Activated B cell treated with CpG ODN at 0.5 μM for 24 hours (primary cell): ENCODE measurements at regions of chr6 and their contacts with region 1.

Region 1: DNA sequence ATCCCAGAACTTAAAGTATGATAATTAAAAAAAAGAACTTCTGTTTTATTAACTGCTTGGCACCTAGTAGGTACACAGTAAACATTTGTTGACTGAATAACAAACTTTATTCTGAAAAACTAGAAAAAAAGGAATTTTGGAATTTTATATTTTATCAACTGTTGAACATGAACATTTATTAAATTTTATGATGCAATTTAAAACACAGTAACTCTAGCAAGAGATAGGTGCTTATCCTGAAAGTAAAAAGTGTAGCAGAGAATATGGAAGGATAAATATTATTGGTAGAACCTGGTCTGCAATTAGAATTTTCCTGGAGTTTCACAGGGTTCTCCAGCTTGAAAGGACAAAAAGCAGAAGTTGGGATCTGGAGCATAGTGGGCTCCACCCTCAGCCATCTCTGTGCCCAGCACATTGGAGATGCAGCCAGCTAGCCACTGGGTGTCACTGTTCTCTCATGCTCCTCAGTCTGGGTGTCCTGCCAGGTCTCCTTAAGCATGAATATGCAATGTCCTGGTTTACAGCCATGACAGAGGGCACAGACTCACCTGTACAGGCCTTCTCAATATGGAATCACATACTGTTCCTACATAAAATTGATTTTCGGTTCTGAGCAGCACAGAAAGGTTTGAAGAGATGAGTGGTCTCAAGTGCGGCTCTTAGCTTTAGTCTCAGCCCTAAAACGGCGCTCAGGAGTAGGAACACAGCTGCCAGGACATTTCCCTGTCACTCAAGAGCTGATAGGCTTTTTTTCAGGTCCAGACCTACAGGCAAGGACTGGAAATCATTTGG is 31.7 kb upstream of the IL20RA start:
- DNase-seq: peak; percentile 39
- ATAC-seq: peak; percentile 100
- H3K4me3 Mint-ChIP-seq: no peak overlapping the region
- H3K27ac Mint-ChIP-seq: no peak overlapping the region
- H3K4me1 Mint-ChIP-seq: peaks cover 2% of the 10 kb centered on the region
- H3K27me3 Mint-ChIP-seq: peaks cover 2% of the 10 kb centered on the region
- CTCF ChIP-seq: peak; percentile 77

Region 2: GRCh38 chr6:136051140-136051775 is 1025.2 kb before region 1 on chr6:
- CTCF ChIA-PET with region 1: no interaction called
- POLR2A ChIA-PET with region 1: no interaction called
- intact Hi-C with region 1: no loop called
- DNase-seq: no peak
- ATAC-seq: no peak
- H3K4me3 Mint-ChIP-seq: no peak overlapping the region
- H3K27ac Mint-ChIP-seq: no peak overlapping the region
- H3K4me1 Mint-ChIP-seq: peaks cover 4% of the 10 kb centered on the region
- H3K27me3 Mint-ChIP-seq: no peaks in the 10 kb centered on the region
- CTCF ChIP-seq: no peak

Region 3: DNA sequence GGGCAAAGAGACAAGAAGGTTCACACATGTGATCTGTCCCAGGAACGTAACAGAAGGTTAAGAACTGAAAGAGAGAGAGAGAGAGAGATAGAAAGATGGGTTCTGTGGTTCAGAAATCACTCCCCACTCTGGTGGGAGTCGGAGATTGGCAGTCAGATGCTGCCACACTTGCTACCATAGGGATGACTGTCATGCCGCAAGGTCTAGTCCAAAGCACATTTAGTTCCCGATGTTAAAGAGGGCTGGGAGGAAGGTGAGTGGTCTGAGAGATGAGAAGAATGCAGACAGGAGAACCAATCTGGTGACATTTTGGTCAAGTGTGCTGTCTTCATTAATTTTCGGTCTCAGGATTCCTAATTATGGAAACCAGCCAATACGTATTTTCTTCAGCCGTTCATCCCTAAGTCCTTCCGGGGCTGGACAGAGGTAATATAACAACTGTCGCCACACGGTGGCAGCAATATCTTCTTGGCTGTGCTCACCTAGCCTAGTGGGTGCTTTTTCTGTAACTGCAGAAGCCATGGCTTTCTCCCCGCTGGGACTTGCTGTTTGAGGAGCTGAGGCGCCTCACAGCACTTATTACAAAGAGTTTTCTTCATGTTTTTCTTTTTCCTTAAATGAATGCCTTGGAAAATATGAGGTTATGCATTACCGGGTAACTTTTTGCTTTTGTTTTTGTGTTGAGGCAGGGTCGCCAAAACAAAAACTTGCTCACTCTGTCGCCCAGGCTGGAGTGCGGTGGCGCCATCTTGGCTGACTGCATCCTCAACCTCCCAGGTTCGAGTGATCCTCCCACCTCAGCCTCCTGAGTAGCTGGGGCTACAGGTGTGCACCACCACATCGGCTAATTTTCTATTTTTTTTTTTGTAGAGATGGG is 108.4 kb before region 1 on chr6:
- CTCF ChIA-PET with region 1: no interaction called
- POLR2A ChIA-PET with region 1: no interaction called
- intact Hi-C with region 1: loop called (anchors 5 kb)
- DNase-seq: peak; percentile 39
- ATAC-seq: peak; percentile 93
- H3K4me3 Mint-ChIP-seq: no peak overlapping the region
- H3K27ac Mint-ChIP-seq: no peak overlapping the region
- H3K4me1 Mint-ChIP-seq: peaks cover 4% of the 10 kb centered on the region
- H3K27me3 Mint-ChIP-seq: peaks cover 12% of the 10 kb centered on the region
- CTCF ChIP-seq: peak; percentile 22

Region 4: GRCh38 chr6:137202078-137202477 is 125.6 kb after region 1 on chr6:
- CTCF ChIA-PET with region 1: no interaction called
- POLR2A ChIA-PET with region 1: no interaction called
- intact Hi-C with region 1: loop called (anchors 1 kb)
- DNase-seq: no peak
- ATAC-seq: peak; percentile 89
- H3K4me3 Mint-ChIP-seq: peak overlapping the region; percentile 24
- H3K27ac Mint-ChIP-seq: peak overlapping the region; percentile 65
- H3K4me1 Mint-ChIP-seq: peaks cover 37% of the 10 kb centered on the region
- H3K27me3 Mint-ChIP-seq: no peaks in the 10 kb centered on the region
- CTCF ChIP-seq: no peak

Region 5: DNA sequence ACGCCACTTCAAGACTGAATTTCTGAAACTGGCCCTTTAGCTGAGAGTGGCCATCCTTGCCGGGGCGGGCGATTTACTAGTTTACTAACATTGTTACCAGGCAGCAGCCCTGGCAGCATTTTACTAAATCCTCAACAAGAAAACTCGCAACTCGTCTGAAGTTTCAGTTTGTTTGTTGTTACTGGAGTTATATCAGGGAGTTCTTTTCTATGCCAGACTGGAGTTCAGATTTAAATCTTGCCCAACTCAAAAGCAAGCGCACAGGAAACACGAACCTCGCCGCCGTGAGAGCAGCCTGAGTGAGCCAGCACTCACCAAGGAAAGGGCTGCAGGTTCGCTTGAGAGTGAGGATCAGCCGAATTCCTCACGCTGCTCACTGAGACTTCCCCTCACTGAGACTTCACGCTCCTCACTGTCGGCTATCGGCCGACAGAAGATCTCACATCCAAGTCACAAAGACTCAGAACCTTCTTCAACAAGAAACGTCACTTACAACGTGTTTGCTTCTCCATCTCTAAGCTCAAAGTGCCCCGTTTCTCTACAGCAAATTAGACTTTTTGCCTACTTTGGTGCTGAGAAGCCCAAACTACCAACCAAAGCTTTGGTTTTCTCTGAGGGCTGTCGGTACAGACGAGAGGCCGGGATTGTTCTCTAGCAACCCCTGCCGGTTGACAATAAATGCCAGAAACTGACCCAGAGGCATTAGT is 338.8 kb after region 1 on chr6:
- CTCF ChIA-PET with region 1: interaction called, 10 read pairs
- POLR2A ChIA-PET with region 1: no interaction called
- intact Hi-C with region 1: loop called (anchors 1 kb)
- DNase-seq: peak; percentile 27
- ATAC-seq: peak; percentile 93
- H3K4me3 Mint-ChIP-seq: peak overlapping the region; percentile 84
- H3K27ac Mint-ChIP-seq: peak overlapping the region; percentile 61
- H3K4me1 Mint-ChIP-seq: peaks cover 11% of the 10 kb centered on the region
- H3K27me3 Mint-ChIP-seq: peaks cover 2% of the 10 kb centered on the region
- CTCF ChIP-seq: no peak

Region 6: DNA sequence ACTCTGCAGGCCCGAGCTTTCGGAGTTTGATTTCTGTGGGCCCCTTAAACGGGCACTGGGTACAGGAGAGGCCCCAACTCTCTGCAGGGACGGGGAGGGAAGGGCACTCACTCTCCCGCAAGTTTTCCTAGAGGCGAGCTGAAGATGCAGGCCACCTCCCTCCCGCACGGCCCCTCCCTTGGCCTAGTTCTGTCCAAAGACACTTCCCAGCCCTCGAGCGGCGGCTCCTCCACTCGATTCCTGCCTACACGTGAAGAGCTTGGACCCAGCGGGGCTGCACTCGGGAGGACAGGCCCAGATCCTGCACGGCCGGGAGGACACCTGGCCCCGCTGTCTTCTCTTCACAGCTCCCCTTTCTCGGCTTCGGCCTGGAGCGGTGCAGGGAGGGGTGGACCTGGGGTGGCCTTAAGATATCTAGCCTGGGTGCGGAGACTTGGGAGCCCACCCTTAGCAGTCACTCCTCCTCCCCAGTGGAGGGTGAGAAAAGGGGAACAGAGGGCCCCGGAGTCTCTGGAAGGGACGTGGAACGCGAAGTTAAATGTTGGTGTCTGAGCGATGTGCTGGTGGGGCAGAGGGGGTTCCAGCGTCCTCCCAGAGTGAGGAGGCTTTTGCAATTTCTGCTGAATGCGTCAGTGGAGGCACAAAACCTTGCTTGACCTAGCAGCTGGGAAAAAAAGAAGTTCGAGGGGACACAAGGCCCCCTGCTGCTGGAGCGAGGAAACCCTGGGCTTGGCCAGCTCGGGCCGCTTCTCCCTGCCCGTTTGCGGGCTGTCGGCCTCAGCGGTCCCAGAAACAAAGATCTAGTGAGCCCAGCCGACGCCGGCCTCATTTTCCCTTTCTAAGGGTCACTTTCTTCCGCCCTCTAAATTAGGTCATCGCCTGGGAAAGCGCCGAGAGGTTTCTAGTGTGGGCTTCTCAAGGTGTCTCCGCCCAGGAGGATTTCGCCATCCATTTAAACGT is 412.9 kb after region 1 on chr6:
- CTCF ChIA-PET with region 1: interaction called, 4 read pairs
- POLR2A ChIA-PET with region 1: no interaction called
- intact Hi-C with region 1: loop called (anchors 2 kb)
- DNase-seq: no peak
- ATAC-seq: peak; percentile 10
- H3K4me3 Mint-ChIP-seq: peak overlapping the region; percentile 33
- H3K27ac Mint-ChIP-seq: no peak overlapping the region
- H3K4me1 Mint-ChIP-seq: peaks cover 47% of the 10 kb centered on the region
- H3K27me3 Mint-ChIP-seq: peaks cover 78% of the 10 kb centered on the region
- CTCF ChIP-seq: no peak